Heart left ventricle (tissue), 16 donors: ENCODE measurements at regions of chr1 and their contacts with region 1.

Region 1: GRCh38 chr1:92784639-92785500 is at the start of gene EVI5:
- DNase-seq: peak; percentile 94 to 97 (median 96)
- ATAC-seq: peak; percentile 97 to 98 (median 97)
- H3K4me3 ChIP-seq: peak within 1 kb of the TSS; percentile 64 to 95 (median 81)
- H3K27ac ChIP-seq: peak within 1 kb of the TSS; percentile 94 to 99 (median 97)
- H3K4me1 ChIP-seq: peaks cover 0 to 39% (median 20%) of the 10 kb centered on the region in 12 donors
- H3K27me3 ChIP-seq: peaks cover 0 to 3% (median 0%) of the 10 kb centered on the region in 9 donors
- CTCF ChIP-seq: peak in 4 of 12 donors; percentile 18 to 51 (median 30)
- POLR2A ChIP-seq: peak in 1 of 2 donors; percentile 73
- total RNA-seq, gene EVI5: 16.7 to 34.6 (median 27.3) TPM

Region 2: DNA sequence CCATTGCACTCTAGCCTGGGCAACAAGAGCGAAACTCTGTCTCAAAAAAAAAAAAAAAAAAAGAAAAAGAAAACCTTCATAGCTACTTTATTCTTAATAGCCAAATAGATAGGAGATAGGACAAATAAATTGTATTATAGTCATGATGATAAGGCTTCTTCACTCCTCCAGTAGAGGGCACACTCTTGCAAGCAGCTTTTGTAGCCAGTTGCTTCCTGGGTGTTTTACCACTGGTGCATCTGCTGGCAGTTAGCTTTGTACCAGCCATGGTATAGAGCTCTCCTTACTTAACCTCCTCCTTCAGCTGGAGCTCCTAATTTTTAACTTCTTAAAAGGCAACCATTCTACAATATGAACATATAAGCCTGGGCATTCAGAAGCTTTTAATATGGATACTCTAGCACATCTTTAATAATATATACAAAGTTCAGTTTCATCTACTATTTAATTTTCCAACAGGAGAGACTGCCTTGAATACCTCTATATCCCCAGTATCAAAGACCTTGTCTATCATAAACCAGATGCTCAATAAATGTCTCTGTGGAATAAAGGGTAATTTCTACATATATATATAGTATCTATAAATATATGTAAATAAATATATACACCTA is 35.7 kb before region 1 on chr1:
- intact Hi-C with region 1: loop called in 1 of 10 experiments (anchors 5 kb)
- DNase-seq: peak in 1 of 5 donors; percentile 16
- ATAC-seq: peak in 3 of 4 donors; percentile 54 to 59 (median 55)
- H3K4me3 ChIP-seq: no peak overlapping the region
- H3K27ac ChIP-seq: no peak overlapping the region
- H3K4me1 ChIP-seq: peaks cover 0 to 25% (median 7%) of the 10 kb centered on the region in 12 donors
- H3K27me3 ChIP-seq: no peaks in the 10 kb centered on the region
- CTCF ChIP-seq: peak; percentile 34 to 72 (median 54)
- POLR2A ChIP-seq: no peak

Region 3: GRCh38 chr1:92754000-92754718 is 30.7 kb before region 1 on chr1:
- intact Hi-C with region 1: loop called in 2 of 10 experiments (anchors 2 to 5 kb)
- DNase-seq: no peak
- ATAC-seq: no peak
- H3K4me3 ChIP-seq: no peak overlapping the region
- H3K27ac ChIP-seq: peak overlapping the region in 2 of 12 donors; percentile 18 to 80
- H3K4me1 ChIP-seq: peaks cover 0 to 32% (median 16%) of the 10 kb centered on the region in 12 donors
- H3K27me3 ChIP-seq: no peaks in the 10 kb centered on the region
- CTCF ChIP-seq: no peak
- POLR2A ChIP-seq: no peak

Region 4: DNA sequence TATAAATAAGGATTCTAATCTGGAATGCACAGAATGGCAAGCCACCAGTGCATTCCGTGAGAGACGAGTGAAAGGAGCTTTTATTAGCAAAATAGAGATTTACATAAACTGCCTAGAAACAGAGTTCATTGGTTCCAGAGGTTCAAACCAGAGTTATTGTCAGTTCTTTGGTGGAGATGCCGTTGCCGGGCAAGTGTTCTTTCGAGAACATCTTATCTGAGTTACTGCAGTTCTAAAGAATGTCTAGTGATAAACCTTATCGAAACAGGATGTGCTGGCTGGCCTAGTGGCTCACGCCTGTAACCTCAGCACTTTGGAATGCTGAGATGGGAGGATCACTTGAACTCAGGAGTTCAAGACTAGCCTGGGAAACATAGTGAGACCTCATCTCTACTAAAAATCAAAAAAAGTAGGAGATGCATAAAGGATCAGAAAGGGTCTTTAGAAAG is 19.9 kb after region 1 on chr1:
- intact Hi-C with region 1: loop called in 1 of 10 experiments (anchors 2 kb)
- DNase-seq: peak; percentile 71 to 85 (median 73)
- ATAC-seq: peak; percentile 86 to 98 (median 96)
- H3K4me3 ChIP-seq: no peak overlapping the region
- H3K27ac ChIP-seq: peak overlapping the region; percentile 20 to 79 (median 52)
- H3K4me1 ChIP-seq: peaks cover 0 to 17% (median 5%) of the 10 kb centered on the region in 12 donors
- H3K27me3 ChIP-seq: no peaks in the 10 kb centered on the region
- CTCF ChIP-seq: no peak
- POLR2A ChIP-seq: no peak